Panc1 (cell line): ENCODE measurements at regions of chr9 and their contacts with region 1.

Region 1: DNA sequence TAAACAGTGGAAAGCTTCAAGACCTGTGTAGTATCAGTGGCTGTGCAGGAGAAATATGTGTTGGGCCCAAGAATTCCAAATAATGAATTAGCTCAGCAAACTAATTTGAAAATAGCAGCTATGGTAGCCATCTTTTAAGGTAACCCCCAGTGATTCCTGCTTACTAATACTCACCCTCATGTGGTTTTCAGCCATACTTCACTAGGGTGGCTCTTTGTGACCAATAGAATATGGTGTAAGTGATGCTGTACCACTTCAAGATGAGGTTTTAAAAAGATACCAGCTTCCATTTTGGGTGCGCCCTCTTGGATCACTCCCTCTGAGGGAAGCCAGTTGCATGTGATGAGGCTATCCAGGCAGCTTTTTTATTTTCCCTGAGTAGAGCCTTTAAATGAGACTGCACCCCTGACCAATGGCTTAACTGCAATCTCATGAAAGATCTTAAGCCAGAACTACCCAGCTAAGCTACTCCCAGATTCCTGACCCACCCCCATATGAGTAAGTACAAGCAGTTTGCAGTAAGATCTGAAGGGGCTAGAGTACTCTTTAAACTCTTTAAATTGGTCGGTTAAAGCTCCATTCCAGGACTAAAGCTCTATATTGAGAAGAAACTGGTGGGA is 58.3 kb downstream of the UHRF2 start:
- DNase-seq: no peak
- ATAC-seq: no peak
- H3K4me3 ChIP-seq: no peak overlapping the region
- H3K27ac ChIP-seq: no peak overlapping the region
- H3K4me1 ChIP-seq: no peaks in the 10 kb centered on the region
- H3K27me3 ChIP-seq: no peaks in the 10 kb centered on the region
- CTCF ChIP-seq: no peak

Region 2: GRCh38 chr9:6368831-6369230 is 102.5 kb before region 1 on chr9:
- CTCF ChIA-PET with region 1: no interaction called
- POLR2A ChIA-PET with region 1: no interaction called
- in situ Hi-C with region 1: no loop called
- intact Hi-C with region 1: no loop called
- DNase-seq: no peak
- ATAC-seq: no peak
- H3K4me3 ChIP-seq: no peak overlapping the region
- H3K27ac ChIP-seq: no peak overlapping the region
- H3K4me1 ChIP-seq: no peaks in the 10 kb centered on the region
- H3K27me3 ChIP-seq: no peaks in the 10 kb centered on the region
- CTCF ChIP-seq: no peak

Region 3: GRCh38 chr9:6512085-6512657 is 40.8 kb after region 1 on chr9:
- CTCF ChIA-PET with region 1: no interaction called
- POLR2A ChIA-PET with region 1: interaction called, 10 read pairs
- in situ Hi-C with region 1: no loop called
- intact Hi-C with region 1: no loop called
- DNase-seq: no peak
- ATAC-seq: no peak
- H3K4me3 ChIP-seq: no peak overlapping the region
- H3K27ac ChIP-seq: no peak overlapping the region
- H3K4me1 ChIP-seq: no peaks in the 10 kb centered on the region
- H3K27me3 ChIP-seq: no peaks in the 10 kb centered on the region
- CTCF ChIP-seq: no peak